Dorsolateral prefrontal cortex (tissue), 120 donors: ENCODE measurements at regions of chr5 and their contacts with region 1.

Region 1: GRCh38 chr5:131810510-131811249 is 13.9 kb upstream of the FNIP1 start:
- DNase-seq: no peak
- H3K4me3 ChIP-seq: no peak overlapping the region
- H3K27ac ChIP-seq: peak overlapping the region in 7 of 59 donors; percentile 2 to 65 (median 23)
- H3K27me3 ChIP-seq: no peaks in the 10 kb centered on the region
- CTCF ChIP-seq: peak in 54 of 56 donors; percentile 13 to 73 (median 46)

Region 2: GRCh38 chr5:131589510-131590348 is 221.0 kb before region 1 on chr5:
- intact Hi-C with region 1: loop called in 1 of 2 experiments (anchors 5 kb)
- DNase-seq: no peak
- H3K4me3 ChIP-seq: no peak overlapping the region
- H3K27ac ChIP-seq: peak overlapping the region in 46 of 59 donors; percentile 2 to 77 (median 48)
- H3K27me3 ChIP-seq: no peaks in the 10 kb centered on the region
- CTCF ChIP-seq: peak; percentile 68 to 97 (median 87)

Region 3: GRCh38 chr5:131974956-131975726 is 164.5 kb after region 1 on chr5:
- intact Hi-C with region 1: no loop called
- DNase-seq: no peak
- H3K4me3 ChIP-seq: no peak overlapping the region
- H3K27ac ChIP-seq: peak overlapping the region in 3 of 59 donors; percentile 7 to 27 (median 15)
- H3K27me3 ChIP-seq: no peaks in the 10 kb centered on the region
- CTCF ChIP-seq: no peak